ENCODE measurements at regions of chr10 and their contacts with region 1.

Region 1: DNA sequence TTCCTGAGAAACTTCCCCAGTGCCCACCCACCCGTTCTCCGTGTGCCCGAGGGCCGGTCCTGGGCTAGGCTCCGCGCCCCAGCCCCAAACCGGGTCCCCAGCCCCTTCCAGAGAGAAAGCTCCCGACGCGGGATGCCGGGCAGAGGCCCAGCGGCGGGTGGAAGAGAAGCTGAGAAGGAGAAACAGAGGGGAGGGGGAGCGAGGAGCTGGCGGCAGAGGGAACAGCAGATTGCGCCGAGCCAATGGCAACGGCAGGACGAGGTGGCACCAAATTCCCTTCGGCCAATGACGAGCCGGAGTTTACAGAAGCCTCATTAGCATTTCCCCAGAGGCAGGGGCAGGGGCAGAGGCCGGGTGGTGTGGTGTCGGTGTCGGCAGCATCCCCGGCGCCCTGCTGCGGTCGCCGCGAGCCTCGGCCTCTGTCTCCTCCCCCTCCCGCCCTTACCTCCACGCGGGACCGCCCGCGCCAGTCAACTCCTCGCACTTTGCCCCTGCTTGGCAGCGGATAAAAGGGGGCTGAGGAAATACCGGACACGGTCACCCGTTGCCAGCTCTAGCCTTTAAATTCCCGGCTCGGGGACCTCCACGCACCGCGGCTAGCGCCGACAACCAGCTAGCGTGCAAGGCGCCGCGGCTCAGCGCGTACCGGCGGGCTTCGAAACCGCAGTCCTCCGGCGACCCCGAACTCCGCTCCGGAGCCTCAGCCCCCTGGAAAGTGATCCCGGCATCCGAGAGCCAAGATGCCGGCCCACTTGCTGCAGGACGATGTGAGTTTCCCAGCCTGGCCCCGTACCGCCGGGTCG is at the start of gene SCD:
- DNase-seq: peak; percentile 88
- ATAC-seq: peak; percentile 85
- H3K4me3 ChIP-seq: peak within 1 kb of the TSS; percentile 96
- H3K27ac ChIP-seq: peak within 1 kb of the TSS; percentile 47
- H3K4me1 ChIP-seq: peaks cover 28% of the 10 kb centered on the region
- H3K27me3 ChIP-seq: no peaks in the 10 kb centered on the region
- CTCF ChIP-seq: no peak
- total RNA-seq, gene SCD: 116 and 121 TPM in 2 replicates

Region 2: DNA sequence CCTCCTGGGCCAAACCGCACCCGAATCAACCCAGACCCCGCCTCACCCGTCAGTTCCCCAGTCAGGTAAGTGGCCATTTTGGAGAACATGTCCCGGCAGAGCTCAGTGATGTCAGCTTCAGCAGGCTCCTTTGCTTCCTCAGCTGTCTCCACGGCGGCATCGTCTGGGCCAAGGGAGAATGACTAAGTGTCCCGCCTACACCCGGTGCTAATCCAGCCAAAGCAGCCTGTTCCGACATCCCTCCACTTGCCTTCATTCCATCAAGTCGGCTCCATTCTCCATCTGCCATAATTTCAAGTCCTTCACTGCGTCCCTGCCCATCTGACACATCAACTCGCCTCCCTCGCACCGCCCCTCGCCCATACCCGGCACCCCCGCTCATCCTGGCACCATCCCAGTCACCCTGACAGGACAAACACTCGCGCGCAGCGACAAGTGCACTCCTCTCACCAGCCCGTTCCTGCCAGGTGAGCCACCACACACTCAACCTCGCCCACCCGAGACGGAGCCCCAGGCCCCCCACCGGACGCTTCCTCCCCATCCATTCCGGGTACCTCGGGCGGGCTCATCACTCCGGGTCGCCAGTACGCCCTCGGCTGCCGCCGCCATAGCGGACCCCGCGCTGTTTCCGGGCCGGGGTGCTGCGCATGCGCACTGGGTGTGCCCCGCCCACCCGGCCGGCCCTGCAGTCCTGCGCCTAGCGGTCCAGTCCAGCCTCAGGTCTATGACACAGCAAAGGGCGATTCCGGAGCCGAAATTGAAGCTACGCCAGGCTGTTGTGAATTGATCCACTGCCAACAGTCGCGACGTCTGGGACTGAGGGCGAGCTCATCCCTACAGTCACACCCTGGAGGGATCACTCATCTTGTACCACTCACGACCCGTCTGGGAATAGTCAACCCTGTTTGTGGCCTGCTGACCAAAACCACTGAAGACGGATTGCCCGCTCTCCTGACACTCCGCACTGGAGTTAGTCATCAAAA is 60.6 kb before region 1 on chr10 and contains the start of gene BLOC1S2:
- CTCF ChIA-PET with region 1: no interaction called
- POLR2A ChIA-PET with region 1: interaction called, 28 read pairs
- intact Hi-C with region 1: no loop called
- DNase-seq: peak; percentile 83
- ATAC-seq: peak; percentile 94
- H3K4me3 ChIP-seq: peak within 1 kb of the TSS; percentile 87
- H3K27ac ChIP-seq: peak within 1 kb of the TSS; percentile 73
- H3K4me1 ChIP-seq: peaks cover 15% of the 10 kb centered on the region
- H3K27me3 ChIP-seq: no peaks in the 10 kb centered on the region
- CTCF ChIP-seq: no peak
- total RNA-seq, gene BLOC1S2: 33.7 and 46.4 TPM in 2 replicates

Region 3: GRCh38 chr10:100373298-100374136 is 26.6 kb after region 1 on chr10:
- CTCF ChIA-PET with region 1: interaction called, 5 read pairs
- POLR2A ChIA-PET with region 1: interaction called, 31 read pairs
- intact Hi-C with region 1: loop called (anchors 1 kb)
- DNase-seq: peak; percentile 94
- ATAC-seq: peak; percentile 76
- H3K4me3 ChIP-seq: peak overlapping the region; percentile 92
- H3K27ac ChIP-seq: peak overlapping the region; percentile 100
- H3K4me1 ChIP-seq: peaks cover 37% of the 10 kb centered on the region
- H3K27me3 ChIP-seq: no peaks in the 10 kb centered on the region
- CTCF ChIP-seq: no peak

Region 4: GRCh38 chr10:100391163-100392002 is 44.4 kb after region 1 on chr10:
- CTCF ChIA-PET with region 1: interaction called, 4 read pairs
- POLR2A ChIA-PET with region 1: no interaction called
- intact Hi-C with region 1: loop called (anchors 5 kb)
- DNase-seq: no peak
- ATAC-seq: no peak
- H3K4me3 ChIP-seq: no peak overlapping the region
- H3K27ac ChIP-seq: no peak overlapping the region
- H3K4me1 ChIP-seq: peaks cover 6% of the 10 kb centered on the region; the same call in 1 of the 2 replicates
- H3K27me3 ChIP-seq: no peaks in the 10 kb centered on the region
- CTCF ChIP-seq: no peak

Region 5: GRCh38 chr10:100401631-100402328 is 54.8 kb after region 1 on chr10:
- CTCF ChIA-PET with region 1: no interaction called
- POLR2A ChIA-PET with region 1: no interaction called
- intact Hi-C with region 1: no loop called
- DNase-seq: no peak
- ATAC-seq: no peak
- H3K4me3 ChIP-seq: no peak overlapping the region
- H3K27ac ChIP-seq: no peak overlapping the region
- H3K4me1 ChIP-seq: no peaks in the 10 kb centered on the region
- H3K27me3 ChIP-seq: no peaks in the 10 kb centered on the region
- CTCF ChIP-seq: no peak

Measured in PC-3 (cell line).